WTC11 (cell line): ENCODE measurements at regions of chr17 and their contacts with region 1.

Region 1: GRCh38 chr17:27332485-27333409 is 38.8 kb downstream of the WSB1 start:
- DNase-seq: peak; percentile 96
- ATAC-seq: peak; percentile 96
- H3K4me3 Mint-ChIP-seq: peak overlapping the region; percentile 67
- H3K27ac Mint-ChIP-seq: peak overlapping the region; percentile 89
- H3K4me1 Mint-ChIP-seq: peaks cover 50% of the 10 kb centered on the region
- H3K27me3 Mint-ChIP-seq: peaks cover 5% of the 10 kb centered on the region; the same call in 1 of the 2 replicates
- CTCF ChIP-seq: no peak

Region 2: DNA sequence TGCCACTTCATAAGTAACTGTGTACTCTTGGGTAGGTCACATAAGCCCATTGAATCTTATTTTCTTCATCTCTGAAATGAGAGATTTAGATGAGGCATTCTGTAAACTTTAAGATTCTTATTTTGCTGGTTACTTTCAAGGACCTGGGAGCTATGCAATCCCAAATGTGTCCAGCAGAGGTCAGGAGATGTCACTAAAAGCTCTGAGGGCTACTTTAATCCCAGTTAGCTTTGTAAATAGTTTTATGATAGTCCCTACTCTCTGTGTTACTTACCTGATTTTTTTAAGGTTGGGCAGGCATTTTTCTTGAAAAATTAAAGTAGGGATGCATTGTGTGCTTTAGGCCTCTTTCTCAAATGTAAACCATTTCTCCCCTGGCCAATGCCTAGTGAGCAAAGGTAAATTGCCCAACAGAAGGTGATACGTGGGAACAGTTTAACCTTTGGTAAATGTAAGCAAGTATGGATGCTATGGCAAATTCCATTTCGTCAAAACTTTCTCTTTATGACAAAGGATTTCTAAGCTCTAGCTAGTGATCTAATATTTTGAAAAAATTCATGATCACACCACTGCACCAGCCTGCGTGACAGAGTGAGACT is 95.9 kb before region 1 on chr17:
- CTCF ChIA-PET with region 1: interaction called, 54 read pairs
- POLR2A ChIA-PET with region 1: interaction called, 4 read pairs
- DNase-seq: peak; percentile 71
- ATAC-seq: peak; percentile 53
- H3K4me3 Mint-ChIP-seq: no peak overlapping the region
- H3K27ac Mint-ChIP-seq: no peak overlapping the region
- H3K4me1 Mint-ChIP-seq: peaks cover 7% of the 10 kb centered on the region
- H3K27me3 Mint-ChIP-seq: peaks cover 3% of the 10 kb centered on the region; the same call in 1 of the 2 replicates
- CTCF ChIP-seq: peak; percentile 62

Region 3: GRCh38 chr17:27245230-27245696 is 87.5 kb before region 1 on chr17:
- CTCF ChIA-PET with region 1: interaction called, 34 read pairs
- POLR2A ChIA-PET with region 1: interaction called, 4 read pairs
- DNase-seq: peak; percentile 81
- ATAC-seq: peak; percentile 97
- H3K4me3 Mint-ChIP-seq: peak overlapping the region; percentile 2; the same call in 1 of the 2 replicates
- H3K27ac Mint-ChIP-seq: no peak overlapping the region
- H3K4me1 Mint-ChIP-seq: peaks cover 25% of the 10 kb centered on the region
- H3K27me3 Mint-ChIP-seq: peaks cover under 1% of the 10 kb centered on the region; the same call in 1 of the 2 replicates
- CTCF ChIP-seq: no peak

Region 4: GRCh38 chr17:27319536-27320221 is 13.1 kb before region 1 on chr17:
- CTCF ChIA-PET with region 1: interaction called, 10 read pairs
- POLR2A ChIA-PET with region 1: interaction called, 3 read pairs
- DNase-seq: no peak
- ATAC-seq: no peak
- H3K4me3 Mint-ChIP-seq: no peak overlapping the region
- H3K27ac Mint-ChIP-seq: no peak overlapping the region; the same call in 1 of the 2 replicates
- H3K4me1 Mint-ChIP-seq: peaks cover 11% of the 10 kb centered on the region
- H3K27me3 Mint-ChIP-seq: no peaks in the 10 kb centered on the region
- CTCF ChIP-seq: no peak

Region 5: GRCh38 chr17:27345141-27345904 is 12.6 kb after region 1 on chr17:
- CTCF ChIA-PET with region 1: interaction called, 27 read pairs
- POLR2A ChIA-PET with region 1: interaction called, 17 read pairs
- DNase-seq: peak; percentile 72
- ATAC-seq: peak; percentile 67
- H3K4me3 Mint-ChIP-seq: peak overlapping the region; percentile 85
- H3K27ac Mint-ChIP-seq: peak overlapping the region; percentile 100
- H3K4me1 Mint-ChIP-seq: peaks cover 53% of the 10 kb centered on the region
- H3K27me3 Mint-ChIP-seq: no peaks in the 10 kb centered on the region
- CTCF ChIP-seq: no peak